AG04449 (cell line): ENCODE measurements at regions of chr3 and their contacts with region 1.

Region 1: DNA sequence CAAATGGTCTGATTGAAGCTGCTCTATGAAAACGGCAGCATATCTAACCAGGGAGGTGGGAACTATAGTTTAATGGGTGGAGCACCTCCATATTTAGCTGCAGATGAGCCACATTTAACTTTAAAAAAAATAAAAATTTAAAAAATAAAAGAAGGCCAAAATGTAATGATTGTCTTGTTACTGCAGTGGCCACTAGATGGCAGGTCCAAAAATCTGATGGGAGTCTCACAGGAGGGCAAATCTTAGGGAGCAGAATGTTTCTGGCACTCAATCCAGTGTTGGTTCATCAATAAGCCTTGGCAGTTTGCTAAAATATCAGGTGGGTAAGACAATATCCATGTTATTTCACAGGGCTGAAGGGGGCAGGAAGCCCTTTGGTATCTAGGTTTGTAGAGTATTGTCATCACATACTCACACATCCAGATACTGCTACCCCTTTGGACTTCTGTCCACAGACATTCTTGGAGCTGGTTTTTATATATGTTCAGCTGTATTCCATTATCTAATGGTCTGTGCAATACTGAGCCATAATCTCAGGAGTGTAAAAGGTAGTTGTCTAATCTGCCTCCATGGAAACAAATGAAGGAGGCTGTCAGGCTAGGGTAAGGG is 233.3 kb downstream of the TIGIT start:
- DNase-seq: no peak
- H3K4me3 ChIP-seq: no peak overlapping the region
- CTCF ChIP-seq: peak; percentile 39

Region 2: DNA sequence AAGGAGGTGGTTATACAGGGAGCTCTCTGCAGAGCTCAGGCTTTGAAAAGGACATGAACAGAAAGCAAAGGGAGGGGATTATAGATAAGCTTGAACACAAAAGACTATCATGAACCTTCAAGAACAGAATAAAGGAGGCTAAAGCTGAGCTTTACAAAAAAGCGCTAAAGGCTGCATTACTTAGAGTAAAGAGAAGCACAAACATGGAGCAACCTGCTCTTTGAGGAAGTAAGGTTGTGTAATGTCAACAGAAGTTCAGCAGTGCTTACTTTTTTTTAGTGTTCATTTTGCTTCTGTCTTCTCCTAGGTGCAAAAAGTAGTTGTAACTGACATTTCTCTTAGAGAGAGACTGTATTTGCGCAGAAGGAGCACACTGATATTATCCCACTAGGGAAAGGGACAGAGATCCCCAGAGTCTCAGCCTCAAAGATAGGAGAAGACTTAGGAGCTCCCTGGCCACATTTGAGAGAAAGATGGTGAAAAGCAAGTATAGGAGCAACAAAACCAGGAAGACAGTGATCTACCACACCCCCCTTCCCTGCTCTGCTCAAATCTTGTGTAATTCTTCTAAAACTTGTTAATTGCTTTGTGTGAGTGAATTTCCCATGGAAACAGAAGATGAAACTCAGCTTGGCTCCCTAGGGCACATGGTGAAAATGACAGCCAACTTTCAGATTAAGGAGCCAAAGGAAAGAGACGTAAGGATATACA is 415.9 kb before region 1 on chr3:
- CTCF ChIA-PET with region 1: no interaction called
- POLR2A ChIA-PET with region 1: no interaction called
- DNase-seq: no peak
- H3K4me3 ChIP-seq: no peak overlapping the region
- CTCF ChIP-seq: no peak

Region 3: GRCh38 chr3:114542359-114542758 is 15.2 kb after region 1 on chr3:
- CTCF ChIA-PET with region 1: interaction called, 10 read pairs
- POLR2A ChIA-PET with region 1: no interaction called
- DNase-seq: no peak
- H3K4me3 ChIP-seq: no peak overlapping the region
- CTCF ChIP-seq: no peak